ENCODE measurements at regions of chr12 and their contacts with region 1.

Region 1: GRCh38 chr12:68977909-68978610 is 45.1 kb upstream of the CPM start:
- DNase-seq: no peak
- H3K4me3 ChIP-seq: peak overlapping the region in 5 of 59 donors; percentile 2 to 33 (median 18)
- H3K27ac ChIP-seq: peak overlapping the region; percentile 59 to 99 (median 92)
- H3K27me3 ChIP-seq: no peaks in the 10 kb centered on the region
- CTCF ChIP-seq: peak in 3 of 56 donors; percentile 16 to 31 (median 22)

Region 2: DNA sequence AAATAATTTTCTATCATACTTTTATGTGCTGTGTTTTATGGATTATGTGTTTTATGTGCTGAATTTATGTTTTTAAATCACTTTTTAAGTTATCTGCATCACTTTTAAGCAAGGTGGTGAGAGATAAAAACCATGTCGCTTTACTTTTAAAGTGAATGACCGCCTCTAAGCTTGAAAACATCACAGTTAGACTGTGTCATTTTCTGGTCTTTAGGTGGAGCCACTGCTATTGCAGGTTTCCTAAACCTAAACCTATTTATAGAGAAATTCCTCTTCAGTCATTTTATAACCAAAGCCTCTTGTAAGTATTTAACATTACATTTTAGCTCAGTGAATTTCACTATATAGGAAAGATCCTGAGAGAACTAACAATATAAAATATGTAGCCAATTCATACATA is 191.1 kb before region 1 on chr12:
- intact Hi-C with region 1: no loop called
- DNase-seq: no peak
- H3K4me3 ChIP-seq: no peak overlapping the region
- H3K27ac ChIP-seq: peak overlapping the region in 45 of 59 donors; percentile 2 to 86 (median 54)
- H3K27me3 ChIP-seq: no peaks in the 10 kb centered on the region
- CTCF ChIP-seq: peak in 7 of 56 donors; percentile 8 to 21 (median 14)

Region 3: DNA sequence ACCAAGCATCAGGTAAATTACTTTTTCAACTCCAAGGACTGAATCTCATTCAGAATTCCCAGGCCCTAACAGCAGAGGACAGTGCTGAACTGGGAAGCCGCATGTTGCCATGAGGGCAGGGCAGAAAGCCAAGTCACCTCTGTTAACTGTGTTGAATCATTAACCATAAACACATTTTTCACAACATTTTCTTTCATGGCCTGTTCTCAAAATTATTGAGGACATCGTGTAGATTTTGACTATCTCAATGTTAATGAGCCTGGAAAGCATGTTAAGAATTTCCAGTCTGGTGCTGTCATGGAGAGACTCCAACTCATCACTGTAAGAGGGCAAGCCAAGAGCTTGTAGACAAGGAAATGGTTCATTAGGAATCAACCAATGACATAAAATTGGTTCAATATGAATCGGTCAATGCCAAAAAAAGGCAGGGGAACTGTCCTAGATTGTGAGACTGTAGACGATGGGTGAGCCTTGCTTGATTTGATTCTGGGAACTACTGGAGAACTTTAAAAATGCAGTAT is 78.7 kb before region 1 on chr12:
- intact Hi-C with region 1: no loop called
- DNase-seq: peak in 2 of 10 donors; percentile 19 to 34
- H3K4me3 ChIP-seq: no peak overlapping the region
- H3K27ac ChIP-seq: peak overlapping the region in 15 of 59 donors; percentile 0 to 50 (median 14)
- H3K27me3 ChIP-seq: no peaks in the 10 kb centered on the region
- CTCF ChIP-seq: peak in 45 of 56 donors; percentile 8 to 66 (median 39)

Region 4: GRCh38 chr12:68932961-68933893 is 44.8 kb before region 1 on chr12 and contains the start of gene CPM:
- intact Hi-C with region 1: loop called (anchors 5 kb)
- DNase-seq: peak; percentile 12 to 86 (median 71)
- H3K4me3 ChIP-seq: peak within 1 kb of the TSS; percentile 48 to 93 (median 77)
- H3K27ac ChIP-seq: peak within 1 kb of the TSS in 58 of 59 donors; percentile 0 to 95 (median 84)
- H3K27me3 ChIP-seq: peaks cover 0 to 33% (median 6%) of the 10 kb centered on the region in 45 donors
- CTCF ChIP-seq: peak in 8 of 56 donors; percentile 4 to 44 (median 19)
- total RNA-seq, gene CPM: 9.4 to 89.6 (median 31.5) TPM

Region 5: DNA sequence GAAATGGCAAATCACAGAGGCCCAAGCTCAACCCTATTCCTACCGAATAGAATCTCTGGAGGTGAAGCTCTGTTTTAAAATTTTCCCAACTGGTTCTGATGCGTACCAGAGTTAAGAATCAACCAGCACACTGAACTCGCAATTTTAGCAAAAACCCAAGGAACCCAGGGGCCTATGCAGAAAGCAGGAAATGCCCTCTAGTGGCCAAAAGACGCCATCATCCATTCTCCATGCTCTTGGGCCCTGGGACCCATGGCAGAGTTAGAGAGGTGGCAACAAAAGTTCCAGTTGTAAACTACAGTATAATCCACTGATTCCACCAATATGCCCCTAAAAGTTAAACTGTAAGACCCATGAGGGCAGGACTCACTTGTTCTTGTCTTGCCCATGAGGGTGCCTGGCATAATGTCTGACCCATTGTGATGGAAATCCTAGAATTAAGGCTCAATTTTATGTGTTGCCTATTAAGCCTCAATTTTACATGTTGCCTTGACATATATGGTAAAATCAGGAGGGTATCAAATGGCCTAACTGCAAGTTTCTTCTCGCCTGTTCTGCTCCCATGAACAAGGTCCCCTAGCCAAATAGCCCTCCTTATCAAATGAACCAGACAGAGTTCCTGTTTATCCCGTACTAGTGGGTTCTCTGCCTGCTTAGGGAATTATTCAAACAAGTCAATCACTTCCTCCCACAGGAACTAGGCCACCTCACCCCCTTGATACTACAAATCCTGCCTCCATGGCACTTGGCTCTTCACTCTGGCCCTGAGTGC is 92.4 kb after region 1 on chr12:
- intact Hi-C with region 1: loop called (anchors 5 to 10 kb)
- DNase-seq: peak in 8 of 10 donors; percentile 22 to 80 (median 64)
- H3K4me3 ChIP-seq: peak overlapping the region in 2 of 59 donors; percentile 15 to 36
- H3K27ac ChIP-seq: peak overlapping the region in 3 of 59 donors; percentile 9 to 47 (median 16)
- H3K27me3 ChIP-seq: peaks cover 0 to 3% (median 0%) of the 10 kb centered on the region in 45 donors
- CTCF ChIP-seq: peak; percentile 62 to 96 (median 90)